Dendritic cell treated with granulocyte-macrophage colony-stimulating factor and Interleukin-4, amounts not matched to agents 40 ng/mL and 50 ng/mL, for 4 days (primary cell): ENCODE measurements at regions of chr19 and their contacts with region 1.

Region 1: GRCh38 chr19:47713046-47714021 is at the start of gene EHD2:
- H3K4me3 Mint-ChIP-seq: peak within 1 kb of the TSS; percentile 41
- H3K27ac Mint-ChIP-seq: no peak within 1 kb of the TSS
- H3K4me1 Mint-ChIP-seq: peaks cover 15% of the 10 kb centered on the region
- H3K27me3 Mint-ChIP-seq: peaks cover 45% of the 10 kb centered on the region

Region 2: GRCh38 chr19:47682939-47683338 is 30.4 kb before region 1 on chr19:
- intact Hi-C with region 1: no loop called
- H3K4me3 Mint-ChIP-seq: no peak overlapping the region
- H3K27ac Mint-ChIP-seq: no peak overlapping the region
- H3K4me1 Mint-ChIP-seq: no peaks in the 10 kb centered on the region
- H3K27me3 Mint-ChIP-seq: no peaks in the 10 kb centered on the region

Region 3: GRCh38 chr19:47742634-47743033 is 29.3 kb after region 1 on chr19:
- intact Hi-C with region 1: loop called (anchors 1 kb)
- H3K4me3 Mint-ChIP-seq: peak overlapping the region; percentile 80
- H3K27ac Mint-ChIP-seq: peak overlapping the region; percentile 83
- H3K4me1 Mint-ChIP-seq: peaks cover 28% of the 10 kb centered on the region
- H3K27me3 Mint-ChIP-seq: peaks cover 9% of the 10 kb centered on the region

Region 4: DNA sequence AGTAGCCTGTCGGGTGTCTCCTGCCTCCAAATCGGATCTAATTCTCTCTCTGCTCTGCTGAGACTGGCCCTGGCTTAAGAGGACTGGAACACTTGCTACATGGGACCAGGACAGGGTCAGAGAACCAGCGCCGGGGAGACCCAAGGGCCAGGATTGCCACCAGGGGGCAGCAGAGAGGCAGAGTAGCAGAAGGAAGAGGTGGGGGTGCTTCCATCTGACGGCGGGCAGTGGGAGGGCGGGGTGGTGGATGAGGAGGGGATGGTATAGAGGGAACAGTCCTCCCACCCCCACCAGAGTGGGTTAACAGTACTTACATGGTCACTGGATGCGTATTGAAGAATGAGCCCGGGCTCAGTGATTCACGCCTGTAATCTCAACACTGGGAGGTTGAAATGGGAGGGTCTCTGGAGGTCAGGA is 77.1 kb after region 1 on chr19:
- intact Hi-C with region 1: loop called (anchors 1 kb)
- H3K4me3 Mint-ChIP-seq: no peak overlapping the region
- H3K27ac Mint-ChIP-seq: no peak overlapping the region
- H3K4me1 Mint-ChIP-seq: no peaks in the 10 kb centered on the region
- H3K27me3 Mint-ChIP-seq: peaks cover 4% of the 10 kb centered on the region